ENCODE measurements at regions of chrX and their contacts with region 1.

Region 1: DNA sequence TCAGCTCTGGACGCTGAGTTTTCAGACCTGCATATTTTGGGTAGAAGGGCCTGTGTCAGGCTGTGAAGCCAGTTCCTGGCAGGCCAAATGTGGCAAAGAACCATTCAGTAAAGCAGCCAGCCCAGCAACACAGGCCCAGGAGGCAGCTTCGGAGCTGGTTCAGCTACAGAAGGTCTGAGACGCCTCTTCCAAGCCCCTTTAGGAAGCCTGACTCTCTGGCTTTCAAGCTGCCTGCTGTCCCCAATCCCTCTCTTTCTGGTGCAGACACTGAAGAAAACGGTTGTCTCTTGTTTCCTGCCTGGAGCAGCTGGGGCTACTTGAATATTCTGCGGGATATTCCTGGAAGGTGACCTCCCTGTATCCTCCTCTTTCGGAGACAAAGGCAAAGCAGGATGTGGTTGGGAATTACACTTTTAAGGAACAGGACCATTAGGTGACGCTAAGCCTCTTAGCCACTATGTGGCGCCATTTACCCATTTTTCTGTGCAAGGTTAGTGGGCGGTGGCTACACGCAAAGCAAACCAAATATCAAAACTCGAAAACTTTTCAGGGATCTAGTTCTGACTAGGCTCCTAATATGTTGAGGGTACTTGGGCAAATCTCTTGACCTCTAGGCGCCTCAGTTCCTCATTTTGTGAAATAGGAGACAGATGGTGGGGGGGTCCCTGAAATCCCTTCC is 47.2 kb upstream of the LAS1L start:
- DNase-seq: peak; percentile 66
- ATAC-seq: peak; percentile 67
- H3K4me3 Mint-ChIP-seq: no peak overlapping the region
- H3K27ac Mint-ChIP-seq: no peak overlapping the region
- H3K4me1 Mint-ChIP-seq: peaks cover 7% of the 10 kb centered on the region
- H3K27me3 Mint-ChIP-seq: no peaks in the 10 kb centered on the region
- CTCF ChIP-seq: peak; percentile 73

Region 2: GRCh38 chrX:65392284-65392683 is 189.5 kb before region 1 on chrX:
- CTCF ChIA-PET with region 1: no interaction called
- POLR2A ChIA-PET with region 1: no interaction called
- intact Hi-C with region 1: no loop called
- DNase-seq: no peak
- ATAC-seq: no peak
- H3K4me3 Mint-ChIP-seq: no peak overlapping the region
- H3K27ac Mint-ChIP-seq: no peak overlapping the region
- H3K4me1 Mint-ChIP-seq: no peaks in the 10 kb centered on the region
- H3K27me3 Mint-ChIP-seq: no peaks in the 10 kb centered on the region
- CTCF ChIP-seq: no peak

Region 3: DNA sequence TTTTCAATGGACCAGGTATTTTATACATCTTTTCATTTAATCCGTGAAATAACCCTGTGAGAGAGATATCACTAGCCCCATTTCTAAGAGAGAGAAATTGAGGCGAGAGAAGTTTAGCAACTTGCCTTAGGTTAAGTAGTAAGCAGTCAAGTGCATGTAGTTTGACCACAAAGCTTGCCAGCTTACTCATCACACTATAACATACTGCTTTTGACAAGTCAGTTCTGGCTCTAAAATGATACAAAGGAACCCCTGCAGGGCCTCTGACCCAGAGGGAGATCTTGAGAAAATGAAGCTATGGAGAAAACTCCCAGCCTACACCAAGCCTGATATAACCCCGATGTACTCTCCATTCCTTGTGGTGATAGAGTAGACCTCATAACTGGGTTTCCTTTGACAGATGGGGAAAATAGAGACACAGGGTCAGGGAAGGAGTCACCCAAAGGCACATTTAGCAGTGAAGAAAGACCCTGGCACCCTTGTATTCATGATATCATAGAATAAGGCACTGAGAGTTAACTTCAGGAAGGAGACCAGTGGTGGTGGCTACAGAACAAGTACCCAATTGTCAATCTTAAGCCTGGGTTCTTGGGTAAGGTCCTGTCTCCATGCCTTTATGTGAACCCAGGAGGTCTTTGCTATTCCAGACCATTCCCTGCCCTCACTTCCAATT is 25.4 kb after region 1 on chrX:
- CTCF ChIA-PET with region 1: no interaction called
- POLR2A ChIA-PET with region 1: no interaction called
- intact Hi-C with region 1: no loop called
- DNase-seq: peak; percentile 54
- ATAC-seq: peak; percentile 92
- H3K4me3 Mint-ChIP-seq: no peak overlapping the region
- H3K27ac Mint-ChIP-seq: peak overlapping the region; percentile 89
- H3K4me1 Mint-ChIP-seq: peaks cover 57% of the 10 kb centered on the region
- H3K27me3 Mint-ChIP-seq: no peaks in the 10 kb centered on the region
- CTCF ChIP-seq: no peak

Region 4: DNA sequence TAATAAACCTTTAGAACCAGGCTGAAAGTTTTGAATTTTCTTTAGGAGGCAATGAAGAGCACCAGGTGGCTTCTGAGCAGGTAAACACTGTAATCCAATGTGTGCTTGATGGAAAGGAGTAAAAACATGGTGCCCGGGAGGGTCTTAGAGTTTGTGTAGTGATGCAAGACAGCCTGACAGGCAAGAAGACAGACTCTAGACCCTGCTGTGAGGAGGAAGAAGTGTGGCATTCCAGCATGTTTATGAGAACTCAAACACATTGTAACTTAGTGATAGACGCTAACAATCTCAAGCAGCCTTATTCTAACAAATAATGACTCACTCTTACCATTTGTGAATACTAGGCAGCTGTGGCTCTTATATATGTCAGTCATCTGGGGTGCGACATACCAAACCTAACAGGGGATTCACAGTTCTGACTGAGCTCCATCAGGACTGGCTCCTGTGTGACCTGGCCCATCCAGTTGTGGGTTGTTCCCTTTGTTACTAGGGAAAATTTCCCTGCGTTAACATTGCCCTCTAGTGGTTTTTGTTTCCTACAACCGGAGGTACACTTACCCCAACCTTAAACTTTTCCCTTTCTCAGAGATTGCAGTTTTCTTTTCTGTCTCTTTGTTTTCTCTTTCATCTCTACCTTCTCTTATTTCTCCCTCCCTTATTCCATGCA is 404.3 kb after region 1 on chrX:
- CTCF ChIA-PET with region 1: interaction called, 5 read pairs
- POLR2A ChIA-PET with region 1: no interaction called
- intact Hi-C with region 1: loop called (anchors 2 kb)
- DNase-seq: peak; percentile 71
- ATAC-seq: peak; percentile 100
- H3K4me3 Mint-ChIP-seq: no peak overlapping the region
- H3K27ac Mint-ChIP-seq: peak overlapping the region; percentile 83
- H3K4me1 Mint-ChIP-seq: peaks cover 23% of the 10 kb centered on the region
- H3K27me3 Mint-ChIP-seq: no peaks in the 10 kb centered on the region
- CTCF ChIP-seq: peak; percentile 32

Region 5: GRCh38 chrX:66110112-66110511 is 528.3 kb after region 1 on chrX:
- CTCF ChIA-PET with region 1: interaction called, 8 read pairs
- POLR2A ChIA-PET with region 1: no interaction called
- intact Hi-C with region 1: loop called (anchors 5 kb)
- DNase-seq: peak; percentile 10
- ATAC-seq: no peak
- H3K4me3 Mint-ChIP-seq: no peak overlapping the region
- H3K27ac Mint-ChIP-seq: no peak overlapping the region
- H3K4me1 Mint-ChIP-seq: no peaks in the 10 kb centered on the region
- H3K27me3 Mint-ChIP-seq: no peaks in the 10 kb centered on the region
- CTCF ChIP-seq: peak; percentile 71

Region 6: DNA sequence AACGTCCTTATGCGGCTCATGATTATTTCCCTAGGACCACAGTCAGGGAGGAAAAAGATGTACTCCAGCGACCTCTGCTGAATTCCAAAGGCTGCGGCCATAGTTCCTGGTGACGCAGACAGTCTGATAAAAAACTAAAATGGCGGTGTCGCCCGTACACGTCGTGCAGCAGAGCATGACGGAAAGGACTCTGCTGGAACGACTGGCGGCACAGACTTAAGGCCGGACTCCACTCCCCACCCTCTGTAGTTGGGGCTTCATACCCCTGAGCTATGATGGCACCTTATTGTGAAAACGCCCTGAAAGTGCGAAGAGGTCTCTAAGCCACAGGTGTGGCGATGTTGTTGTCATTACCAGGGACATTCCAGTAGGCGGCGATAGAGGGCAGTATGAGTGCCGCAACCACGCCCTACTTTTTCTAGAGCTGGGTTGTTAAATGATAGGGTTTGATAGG is 1147.0 kb after region 1 on chrX:
- CTCF ChIA-PET with region 1: interaction called, 10 read pairs
- POLR2A ChIA-PET with region 1: no interaction called
- intact Hi-C with region 1: no loop called
- DNase-seq: peak; percentile 59
- ATAC-seq: peak; percentile 92
- H3K4me3 Mint-ChIP-seq: peak overlapping the region; percentile 82
- H3K27ac Mint-ChIP-seq: peak overlapping the region; percentile 88
- H3K4me1 Mint-ChIP-seq: peaks cover 2% of the 10 kb centered on the region
- H3K27me3 Mint-ChIP-seq: no peaks in the 10 kb centered on the region
- CTCF ChIP-seq: peak; percentile 66